ENCODE measurements at regions of chr4 and their contacts with region 1.

Region 1: DNA sequence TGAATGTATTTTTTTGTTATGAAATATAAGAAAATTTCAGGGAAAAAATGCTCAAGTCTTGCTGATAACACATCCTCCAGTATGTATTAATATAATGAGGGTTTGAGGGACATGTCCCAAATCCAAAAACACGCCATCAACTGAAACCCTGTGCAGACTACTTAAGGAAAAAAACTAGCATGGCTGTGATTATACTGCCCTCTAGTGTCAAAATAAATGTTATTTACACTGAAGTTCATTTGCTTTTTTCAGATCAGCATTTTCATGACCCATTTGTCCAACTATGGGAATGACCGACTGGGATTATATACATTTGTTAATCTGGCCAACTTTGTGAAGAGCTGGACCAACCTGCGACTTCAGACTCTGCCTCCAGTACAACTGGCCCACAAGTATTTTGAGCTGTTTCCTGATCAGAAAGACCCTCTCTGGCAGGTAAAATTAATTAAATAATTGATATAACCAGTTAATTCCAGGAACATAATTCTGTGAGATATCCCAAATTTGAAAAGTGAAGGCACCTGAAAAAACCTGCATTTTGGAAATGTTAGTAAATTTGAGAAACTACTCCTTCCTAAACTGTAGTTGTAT is 128.5 kb downstream of the PRSS12 start:
- DNase-seq: no peak
- H3K4me3 ChIP-seq: no peak overlapping the region
- H3K27ac ChIP-seq: no peak overlapping the region
- H3K4me1 ChIP-seq: no peaks in the 10 kb centered on the region
- H3K27me3 ChIP-seq: no peaks in the 10 kb centered on the region
- CTCF ChIP-seq: peak in 2 of 3 experiments; percentile 40 to 51; a peak in 2 of 4 replicates
- EP300 ChIP-seq: no peak
- POLR2A ChIP-seq: no peak
- RAD21 ChIP-seq: peak; percentile 84 to 88

Region 2: DNA sequence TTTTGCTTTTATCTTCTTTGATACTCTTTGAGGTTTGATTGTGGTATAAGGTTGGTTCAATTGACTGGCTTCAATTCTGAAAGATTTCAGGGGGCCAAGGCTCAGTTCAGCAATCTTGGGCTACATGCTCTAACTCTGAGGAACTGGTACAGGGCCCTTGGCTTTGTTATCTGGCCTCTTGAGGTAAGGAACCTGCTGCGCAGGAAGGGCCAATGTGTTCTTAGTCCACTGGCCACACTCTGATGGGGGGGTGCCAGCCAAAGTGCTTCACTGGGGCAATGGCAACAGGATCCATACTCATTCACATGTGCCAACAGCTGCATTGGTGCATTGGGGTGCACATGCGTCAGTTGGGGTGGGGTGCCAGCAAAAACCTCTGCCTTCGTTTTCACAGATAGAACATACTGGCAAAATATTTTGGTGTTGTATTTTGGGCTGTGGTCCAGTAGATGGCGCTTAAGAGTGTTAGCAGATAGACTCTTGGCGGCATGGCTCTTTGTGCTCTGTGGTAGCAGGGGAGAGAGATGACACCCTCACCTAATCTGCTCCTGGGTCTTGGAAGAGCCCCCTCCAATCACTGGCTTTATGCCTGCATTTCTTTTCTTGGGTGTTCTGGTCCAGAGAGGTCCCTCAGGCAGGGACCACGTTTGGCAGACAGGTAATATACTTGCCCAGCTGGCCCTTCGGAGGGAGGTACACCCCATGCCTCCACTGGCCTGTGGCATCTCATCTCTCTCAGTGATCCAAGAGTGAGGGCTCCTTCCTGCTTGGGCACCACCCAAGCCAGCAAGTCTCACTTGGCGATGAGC is 147.2 kb before region 1 on chr4:
- CTCF ChIA-PET with region 1: interaction called, 18 read pairs
- POLR2A ChIA-PET with region 1: no interaction called
- DNase-seq: peak in 1 of 2 experiments; percentile 67
- H3K4me3 ChIP-seq: no peak overlapping the region
- H3K27ac ChIP-seq: no peak overlapping the region
- H3K4me1 ChIP-seq: no peaks in the 10 kb centered on the region
- H3K27me3 ChIP-seq: peaks cover 0 to 3% (median 0%) of the 10 kb centered on the region in 4 experiments; a peak in 2 of 7 replicates
- CTCF ChIP-seq: peak; percentile 16 to 75 (median 65)
- EP300 ChIP-seq: no peak
- POLR2A ChIP-seq: no peak
- RAD21 ChIP-seq: peak; percentile 67 to 75

Region 3: GRCh38 chr4:118124997-118125396 is 99.3 kb before region 1 on chr4:
- CTCF ChIA-PET with region 1: no interaction called
- POLR2A ChIA-PET with region 1: no interaction called
- DNase-seq: no peak
- H3K4me3 ChIP-seq: no peak overlapping the region
- H3K27ac ChIP-seq: no peak overlapping the region
- H3K4me1 ChIP-seq: 0 out of 7 replicates have a peak, but pooled peaks cover 0 to 3% (median 0%) of the 10 kb centered on the region in 4 experiments
- H3K27me3 ChIP-seq: no peaks in the 10 kb centered on the region
- CTCF ChIP-seq: no peak
- EP300 ChIP-seq: no peak
- POLR2A ChIP-seq: no peak
- RAD21 ChIP-seq: no peak

Region 4: DNA sequence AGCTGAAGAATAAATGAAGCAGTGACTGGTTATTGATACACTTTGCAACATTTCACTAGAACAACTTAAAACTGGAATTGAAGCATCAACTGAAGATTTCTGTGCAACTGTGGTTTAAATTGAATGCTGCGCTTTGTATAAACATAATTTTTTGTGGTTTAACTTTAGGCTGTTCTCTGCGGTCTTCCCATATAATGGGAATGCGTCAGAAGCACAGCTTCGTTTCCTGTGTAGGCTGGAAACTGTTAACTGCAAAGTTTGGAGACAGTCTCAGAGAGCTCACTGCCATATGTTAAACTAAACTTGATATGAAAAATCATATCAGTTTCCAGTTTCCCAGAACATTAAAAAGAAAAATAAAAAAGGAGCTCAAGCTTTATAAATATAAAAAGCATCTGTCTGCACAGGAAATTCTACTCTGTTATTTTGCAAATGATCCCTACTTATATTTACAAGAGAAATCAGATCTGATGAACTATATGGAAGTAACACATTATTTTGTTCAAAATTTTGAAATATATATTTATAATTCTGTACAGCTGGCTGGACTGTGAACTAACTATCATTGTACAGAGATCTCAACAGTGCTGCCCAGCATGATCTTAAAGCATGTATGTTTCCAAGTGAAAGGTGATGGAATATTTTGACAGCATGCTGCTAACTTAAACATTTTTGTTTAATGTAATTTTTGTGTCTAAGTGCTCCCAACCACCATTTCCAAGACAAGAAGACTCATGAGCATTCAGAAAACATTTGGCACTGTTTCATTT is 50.2 kb before region 1 on chr4:
- CTCF ChIA-PET with region 1: no interaction called
- POLR2A ChIA-PET with region 1: no interaction called
- DNase-seq: no peak
- H3K4me3 ChIP-seq: no peak overlapping the region
- H3K27ac ChIP-seq: no peak overlapping the region
- H3K4me1 ChIP-seq: peaks cover 0 to 5% (median 0%) of the 10 kb centered on the region in 4 experiments; a peak in 2 of 7 replicates
- H3K27me3 ChIP-seq: no peaks in the 10 kb centered on the region
- CTCF ChIP-seq: no peak
- EP300 ChIP-seq: no peak
- POLR2A ChIP-seq: no peak
- RAD21 ChIP-seq: no peak

Region 5: GRCh38 chr4:118213101-118213500 is 11.2 kb before region 1 on chr4:
- CTCF ChIA-PET with region 1: interaction called, 24 read pairs
- POLR2A ChIA-PET with region 1: no interaction called
- DNase-seq: no peak
- H3K4me3 ChIP-seq: no peak overlapping the region
- H3K27ac ChIP-seq: no peak overlapping the region
- H3K4me1 ChIP-seq: peaks cover 0 to 8% (median 0%) of the 10 kb centered on the region in 4 experiments; a peak in 1 of 7 replicates
- H3K27me3 ChIP-seq: no peaks in the 10 kb centered on the region
- CTCF ChIP-seq: no peak
- EP300 ChIP-seq: no peak
- POLR2A ChIP-seq: no peak
- RAD21 ChIP-seq: no peak

Region 6: GRCh38 chr4:118296729-118297128 is 72.4 kb after region 1 on chr4:
- CTCF ChIA-PET with region 1: no interaction called
- POLR2A ChIA-PET with region 1: no interaction called
- DNase-seq: no peak
- H3K4me3 ChIP-seq: no peak overlapping the region
- H3K27ac ChIP-seq: no peak overlapping the region
- H3K4me1 ChIP-seq: no peaks in the 10 kb centered on the region
- H3K27me3 ChIP-seq: no peaks in the 10 kb centered on the region
- CTCF ChIP-seq: no peak
- EP300 ChIP-seq: no peak
- POLR2A ChIP-seq: no peak
- RAD21 ChIP-seq: no peak